ENCODE measurements at regions of chr6 and their contacts with region 1.

Region 1: GRCh38 chr6:14857501-14857900 is 388.4 kb upstream of the JARID2 start:
- DNase-seq: peak; percentile 54 to 86 (median 73)
- ATAC-seq: peak; percentile 99
- H3K4me3 ChIP-seq: peak overlapping the region; percentile 55
- H3K4me3 Mint-ChIP-seq: peak overlapping the region; percentile 72 to 95 (median 78)
- H3K27ac ChIP-seq: peak overlapping the region; percentile 59
- H3K27ac Mint-ChIP-seq: peak overlapping the region; percentile 86 to 98 (median 95)
- H3K4me1 ChIP-seq: peaks cover 8 to 20% of the 10 kb centered on the region in 2 donors
- H3K4me1 Mint-ChIP-seq: peaks cover 13 to 40% (median 16%) of the 10 kb centered on the region in 7 donors
- H3K27me3 ChIP-seq: no peaks in the 10 kb centered on the region
- H3K27me3 Mint-ChIP-seq: no peaks in the 10 kb centered on the region

Region 2: DNA sequence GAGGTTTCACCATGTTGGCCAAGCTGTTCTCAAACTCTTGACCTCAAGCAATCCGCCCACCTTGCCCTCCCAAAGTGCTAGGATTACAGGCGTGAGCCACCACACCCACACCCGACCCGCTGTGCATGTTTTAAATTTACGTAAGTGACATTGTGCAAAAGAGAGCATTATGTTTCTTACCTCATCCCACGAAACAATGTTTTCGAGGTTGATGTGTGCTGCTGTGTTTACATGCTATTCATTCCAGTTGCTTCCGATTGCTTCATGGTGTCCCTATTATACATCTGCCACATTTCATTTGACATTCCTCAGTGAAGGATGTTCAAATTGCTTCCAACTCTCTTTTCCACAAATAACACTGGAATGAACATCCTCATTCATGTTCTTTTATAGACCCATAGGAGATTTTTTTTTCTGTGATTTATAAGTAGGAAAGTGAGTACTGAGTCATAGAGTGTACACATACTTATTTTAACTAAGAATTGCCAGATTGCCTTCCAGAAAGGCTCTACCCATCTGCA is 15.5 kb before region 1 on chr6:
- CTCF ChIA-PET with region 1: no interaction called
- POLR2A ChIA-PET with region 1: no interaction called
- intact Hi-C with region 1: no loop called
- DNase-seq: no peak
- ATAC-seq: peak; percentile 37
- H3K4me3 ChIP-seq: no peak overlapping the region
- H3K4me3 Mint-ChIP-seq: no peak overlapping the region
- H3K27ac ChIP-seq: no peak overlapping the region
- H3K27ac Mint-ChIP-seq: no peak overlapping the region
- H3K4me1 ChIP-seq: no peaks in the 10 kb centered on the region
- H3K4me1 Mint-ChIP-seq: peaks cover 0 to 4% (median 0%) of the 10 kb centered on the region in 7 donors
- H3K27me3 ChIP-seq: no peaks in the 10 kb centered on the region
- H3K27me3 Mint-ChIP-seq: peaks cover 0 to 11% (median 0%) of the 10 kb centered on the region in 5 donors

Region 3: DNA sequence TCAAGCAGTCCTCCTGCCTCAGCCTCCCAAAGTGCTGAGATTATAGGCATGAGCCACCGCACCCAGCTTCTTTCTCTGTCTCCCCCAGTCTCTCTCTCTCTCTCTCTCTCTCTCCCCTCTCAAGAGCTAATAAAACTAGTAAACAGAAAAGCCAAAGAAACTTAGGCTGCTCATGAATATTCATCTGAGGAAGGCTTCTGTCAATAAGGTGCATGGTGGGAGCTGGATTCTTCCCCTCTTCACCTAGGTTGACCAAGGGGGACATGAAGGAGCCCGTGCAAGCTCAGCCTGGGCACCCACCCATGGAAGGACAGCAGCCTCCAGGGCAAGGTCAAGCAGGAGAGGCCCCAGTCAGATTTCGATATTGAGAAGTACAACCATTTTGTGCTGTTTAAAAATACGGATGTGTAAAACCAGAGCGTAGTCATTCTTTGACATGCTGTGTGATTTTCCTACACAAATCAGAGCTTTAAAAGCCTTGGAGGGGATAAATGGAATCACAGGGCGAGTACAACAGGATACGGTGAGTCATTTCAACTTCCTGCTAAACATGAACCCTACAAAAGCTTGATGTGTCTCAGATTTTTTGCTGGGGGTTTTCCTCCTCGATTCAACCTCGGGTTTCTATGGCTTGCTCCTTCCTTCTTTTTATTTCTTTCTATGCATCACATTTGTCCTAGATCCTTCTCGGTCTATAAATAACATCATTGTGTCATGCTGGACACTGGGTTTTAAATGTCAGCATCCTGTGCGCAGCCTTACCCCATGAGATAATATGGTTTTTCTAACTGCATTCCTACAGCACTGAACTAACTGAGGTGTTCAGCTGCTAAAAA is 19.5 kb after region 1 on chr6:
- CTCF ChIA-PET with region 1: no interaction called
- POLR2A ChIA-PET with region 1: no interaction called
- intact Hi-C with region 1: loop called in 1 of 2 experiments (anchors 2 kb)
- DNase-seq: peak in 8 of 9 donors; percentile 1 to 65 (median 34)
- ATAC-seq: peak; percentile 88
- H3K4me3 ChIP-seq: peak overlapping the region; percentile 25
- H3K4me3 Mint-ChIP-seq: peak overlapping the region; percentile 52 to 80 (median 66)
- H3K27ac ChIP-seq: peak overlapping the region; percentile 2
- H3K27ac Mint-ChIP-seq: peak overlapping the region; percentile 43 to 92 (median 79)
- H3K4me1 ChIP-seq: peaks cover 15 to 16% of the 10 kb centered on the region in 2 donors
- H3K4me1 Mint-ChIP-seq: peaks cover 26 to 55% (median 35%) of the 10 kb centered on the region in 7 donors
- H3K27me3 ChIP-seq: no peaks in the 10 kb centered on the region
- H3K27me3 Mint-ChIP-seq: no peaks in the 10 kb centered on the region

Region 4: GRCh38 chr6:14910692-14911547 is 53.4 kb after region 1 on chr6:
- CTCF ChIA-PET with region 1: no interaction called
- POLR2A ChIA-PET with region 1: no interaction called
- intact Hi-C with region 1: loop called in 1 of 2 experiments (anchors 5 kb)
- DNase-seq: peak in 5 of 9 donors; percentile 12 to 24 (median 17)
- ATAC-seq: peak; percentile 86
- H3K4me3 ChIP-seq: peak overlapping the region; percentile 17
- H3K4me3 Mint-ChIP-seq: peak overlapping the region; percentile 74 to 87 (median 80)
- H3K27ac ChIP-seq: no peak overlapping the region
- H3K27ac Mint-ChIP-seq: peak overlapping the region; percentile 37 to 86 (median 74)
- H3K4me1 ChIP-seq: peaks cover 10 to 18% of the 10 kb centered on the region in 2 donors
- H3K4me1 Mint-ChIP-seq: peaks cover 18 to 34% (median 25%) of the 10 kb centered on the region in 7 donors
- H3K27me3 ChIP-seq: no peaks in the 10 kb centered on the region
- H3K27me3 Mint-ChIP-seq: no peaks in the 10 kb centered on the region